ENCODE measurements at regions of chr10 and their contacts with region 1.

Region 1: GRCh38 chr10:80144067-80144695 is 11.7 kb downstream of the PLAC9 start:
- DNase-seq: peak in 10 of 14 experiments; percentile 11 to 54 (median 30)
- ATAC-seq: peak; percentile 43
- H3K4me3 ChIP-seq: peak overlapping the region; percentile 56
- H3K4me3 Mint-ChIP-seq: peak overlapping the region; percentile 85
- H3K27ac ChIP-seq: no peak overlapping the region
- H3K27ac Mint-ChIP-seq: peak overlapping the region; percentile 89
- H3K4me1 ChIP-seq: peaks cover 17% of the 10 kb centered on the region
- H3K4me1 Mint-ChIP-seq: peaks cover 27% of the 10 kb centered on the region
- H3K27me3 ChIP-seq: no peaks in the 10 kb centered on the region
- H3K27me3 Mint-ChIP-seq: peaks cover 12% of the 10 kb centered on the region
- CTCF ChIP-seq: peak; percentile 31

Region 2: DNA sequence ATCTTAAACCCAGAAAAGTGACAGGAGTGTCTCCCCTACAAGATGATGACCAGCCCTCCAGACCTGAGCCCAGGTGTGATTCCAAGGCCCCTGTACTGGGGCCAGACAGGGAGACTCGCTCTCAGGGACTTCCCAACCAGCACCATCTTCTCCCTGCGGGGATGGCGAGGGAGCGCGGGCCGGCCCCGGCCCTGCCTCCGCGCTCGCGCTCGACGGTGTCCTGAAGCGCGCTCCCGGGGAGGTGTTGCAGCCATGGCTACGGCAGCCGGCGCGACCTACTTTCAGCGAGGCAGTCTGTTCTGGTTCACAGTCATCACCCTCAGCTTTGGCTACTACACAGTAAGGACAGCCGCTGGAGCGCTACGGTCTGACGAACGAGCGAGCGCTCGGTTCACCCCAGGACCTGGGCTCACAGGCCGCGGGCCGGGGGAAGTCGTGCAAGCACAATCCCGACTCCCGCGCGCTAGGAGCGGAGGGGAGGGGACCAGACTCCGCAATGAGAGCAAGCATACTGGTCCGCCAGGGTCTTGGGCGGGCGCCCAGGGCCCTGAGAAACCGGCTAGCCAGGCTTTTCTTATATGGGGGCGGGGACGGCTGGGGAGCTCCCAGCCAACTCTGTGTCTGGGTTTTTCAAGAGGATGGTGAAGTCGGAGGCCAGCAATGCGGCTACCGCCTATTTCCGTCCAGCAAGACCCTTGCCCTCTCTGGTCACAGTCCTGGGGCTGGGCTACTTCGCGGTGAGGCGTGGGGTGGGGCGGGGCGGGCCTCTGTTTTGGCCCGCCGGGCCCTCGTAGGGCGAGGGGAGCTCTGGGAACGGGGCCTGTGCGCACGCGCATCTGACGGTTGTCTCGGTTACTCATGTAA is 65.5 kb before region 1 on chr10 and contains the start of gene TMEM254:
- CTCF ChIA-PET with region 1: no interaction called
- POLR2A ChIA-PET with region 1: interaction called, 4 read pairs
- intact Hi-C with region 1: loop called in 1 of 2 experiments (anchors 5 kb)
- DNase-seq: peak; percentile 77 to 94 (median 88)
- ATAC-seq: peak; percentile 76
- H3K4me3 ChIP-seq: peak within 1 kb of the TSS; percentile 99
- H3K4me3 Mint-ChIP-seq: peak within 1 kb of the TSS; percentile 85
- H3K27ac ChIP-seq: peak within 1 kb of the TSS; percentile 86 to 90
- H3K27ac Mint-ChIP-seq: peak within 1 kb of the TSS; percentile 74
- H3K4me1 ChIP-seq: peaks cover 17% of the 10 kb centered on the region
- H3K4me1 Mint-ChIP-seq: peaks cover 30% of the 10 kb centered on the region
- H3K27me3 ChIP-seq: no peaks in the 10 kb centered on the region
- H3K27me3 Mint-ChIP-seq: no peaks in the 10 kb centered on the region
- CTCF ChIP-seq: no peak
- total RNA-seq, gene TMEM254: 4.0 to 5.6 TPM

Region 3: GRCh38 chr10:80187465-80188409 is 43.6 kb after region 1 on chr10:
- CTCF ChIA-PET with region 1: interaction called, 7 read pairs
- POLR2A ChIA-PET with region 1: interaction called, 30 read pairs
- intact Hi-C with region 1: loop called in 1 of 2 experiments (anchors 5 kb)
- DNase-seq: peak; percentile 72 to 96 (median 83)
- ATAC-seq: peak; percentile 93
- H3K4me3 ChIP-seq: peak overlapping the region; percentile 42
- H3K4me3 Mint-ChIP-seq: peak overlapping the region; percentile 80
- H3K27ac ChIP-seq: peak overlapping the region; percentile 76 to 84
- H3K27ac Mint-ChIP-seq: peak overlapping the region; percentile 91
- H3K4me1 ChIP-seq: peaks cover 85% of the 10 kb centered on the region
- H3K4me1 Mint-ChIP-seq: peaks cover 90% of the 10 kb centered on the region
- H3K27me3 ChIP-seq: no peaks in the 10 kb centered on the region
- H3K27me3 Mint-ChIP-seq: no peaks in the 10 kb centered on the region
- CTCF ChIP-seq: no peak